ENCODE measurements at regions of chr14 and their contacts with region 1.

Region 1: GRCh38 chr14:22852940-22853767 is 16.8 kb downstream of the MMP14 start:
- DNase-seq: peak; percentile 90
- H3K4me3 Mint-ChIP-seq: peak overlapping the region; percentile 68
- H3K27ac Mint-ChIP-seq: peak overlapping the region; percentile 44
- H3K4me1 Mint-ChIP-seq: peaks cover 46% of the 10 kb centered on the region
- H3K27me3 Mint-ChIP-seq: peaks cover 23% of the 10 kb centered on the region

Region 2: DNA sequence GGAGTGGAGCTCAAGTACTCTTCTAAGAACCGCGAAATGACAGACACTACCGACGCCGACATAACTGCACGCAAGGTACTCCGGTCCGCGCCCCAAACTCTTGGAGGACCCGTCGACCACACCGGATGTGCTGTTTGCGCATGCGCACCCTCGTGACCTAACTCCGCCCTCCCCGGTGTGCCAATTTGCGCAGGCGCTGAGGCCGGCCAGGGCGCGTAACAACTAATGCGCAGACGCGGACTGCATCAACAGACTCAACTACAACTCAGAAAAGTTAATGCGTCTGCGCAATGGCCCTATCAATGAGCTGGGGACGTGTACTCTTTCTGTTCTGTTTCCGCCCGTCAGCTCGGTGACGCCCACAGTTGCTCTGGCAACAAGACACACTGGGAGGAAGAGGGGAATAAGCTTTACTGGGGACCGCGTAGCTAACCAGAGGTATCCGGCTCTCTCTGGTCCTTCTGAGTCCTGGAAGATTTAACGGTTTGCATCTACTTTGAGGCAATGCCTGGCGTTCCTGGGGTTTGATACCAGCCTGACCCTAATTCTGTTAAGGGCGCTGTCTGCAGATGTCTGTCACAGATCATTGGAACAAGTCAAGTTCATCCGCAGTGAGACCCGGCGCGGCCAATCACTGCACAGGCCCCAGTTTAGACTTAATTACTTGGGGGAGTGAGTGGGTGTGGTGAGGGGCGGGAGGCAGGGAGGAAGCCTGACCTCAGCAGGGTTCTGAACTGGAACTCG is 263.9 kb before region 1 on chr14 and contains the start of gene DAD1:
- CTCF ChIA-PET with region 1: interaction called, 12 read pairs
- POLR2A ChIA-PET with region 1: no interaction called
- DNase-seq: peak; percentile 100
- H3K4me3 Mint-ChIP-seq: peak within 1 kb of the TSS; percentile 93
- H3K27ac Mint-ChIP-seq: peak within 1 kb of the TSS; percentile 98
- H3K4me1 Mint-ChIP-seq: peaks cover 55% of the 10 kb centered on the region
- H3K27me3 Mint-ChIP-seq: peaks cover 6% of the 10 kb centered on the region
- total RNA-seq, gene DAD1: 160 to 167 TPM

Region 3: DNA sequence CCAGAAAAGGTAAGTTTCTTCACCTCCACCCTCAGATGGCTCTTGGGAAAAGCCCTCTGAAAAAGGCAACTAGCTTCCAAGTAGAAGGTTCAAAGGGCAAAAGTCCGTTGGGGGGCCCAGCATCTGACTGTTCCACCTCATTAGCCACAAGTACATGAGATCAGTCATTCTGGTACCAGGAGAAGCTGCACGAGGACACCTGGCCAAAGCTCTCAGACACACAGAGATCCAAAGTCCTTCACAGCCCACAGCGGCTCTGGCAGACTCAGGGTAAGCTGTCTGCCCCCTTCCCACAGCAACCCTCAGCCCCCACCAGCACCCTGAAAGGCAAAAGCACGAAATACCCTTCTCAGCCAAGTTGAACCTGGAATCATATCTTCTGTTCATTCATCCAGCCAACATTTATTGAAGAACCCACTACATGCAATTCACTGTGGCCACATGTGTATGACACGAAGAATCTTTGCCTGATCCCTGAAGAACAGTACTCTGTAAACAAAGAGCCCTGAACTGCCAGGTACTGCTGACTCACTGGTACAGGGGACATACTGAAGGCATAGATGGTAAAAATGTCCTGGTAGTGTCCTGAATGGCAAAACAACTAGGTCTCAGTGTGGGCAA is 57.0 kb before region 1 on chr14:
- CTCF ChIA-PET with region 1: no interaction called
- POLR2A ChIA-PET with region 1: no interaction called
- DNase-seq: no peak
- H3K4me3 Mint-ChIP-seq: no peak overlapping the region
- H3K27ac Mint-ChIP-seq: no peak overlapping the region
- H3K4me1 Mint-ChIP-seq: no peaks in the 10 kb centered on the region
- H3K27me3 Mint-ChIP-seq: peaks cover 46% of the 10 kb centered on the region

Region 4: DNA sequence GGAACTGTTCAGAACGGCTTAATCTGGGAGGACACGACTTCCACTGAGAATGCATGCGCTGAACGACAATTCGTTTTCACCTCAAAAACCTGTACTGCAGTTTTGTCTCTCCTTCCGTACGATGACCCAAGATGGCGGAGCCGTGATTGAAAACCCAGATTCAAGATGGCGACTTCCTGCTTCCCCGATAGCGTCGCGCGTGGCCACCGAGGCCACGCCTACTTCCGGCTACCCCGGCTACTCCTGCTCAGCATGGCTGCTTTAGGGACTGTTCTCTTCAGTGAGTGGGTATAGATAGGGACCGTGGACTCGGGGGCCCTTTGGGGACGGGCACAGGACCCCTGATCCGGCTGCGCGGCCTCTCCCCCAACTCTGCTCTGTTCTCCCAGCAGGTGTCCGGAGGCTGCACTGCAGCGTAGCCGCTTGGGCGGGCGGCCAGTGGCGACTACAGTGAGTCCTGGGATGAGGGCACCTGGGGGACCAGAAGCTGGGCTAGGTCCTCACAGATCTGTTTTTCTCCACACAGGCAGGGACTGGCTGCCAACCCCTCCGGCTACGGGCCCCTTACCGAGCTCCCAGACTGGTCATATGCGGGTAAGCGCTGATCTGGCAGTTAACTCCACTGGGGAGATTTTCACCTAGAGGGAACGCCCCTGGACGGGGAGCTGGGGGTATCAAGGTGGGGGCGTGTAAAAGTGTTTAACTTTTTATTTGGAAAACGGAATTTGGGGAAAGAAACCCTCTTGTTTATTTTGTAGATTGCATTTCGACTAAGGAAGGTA is 23.3 kb before region 1 on chr14 and contains the start of gene MRPL52:
- CTCF ChIA-PET with region 1: interaction called, 195 read pairs
- POLR2A ChIA-PET with region 1: interaction called, 17 read pairs
- DNase-seq: peak; percentile 93
- H3K4me3 Mint-ChIP-seq: peak within 1 kb of the TSS; percentile 87
- H3K27ac Mint-ChIP-seq: peak within 1 kb of the TSS; percentile 90
- H3K4me1 Mint-ChIP-seq: peaks cover 33% of the 10 kb centered on the region
- H3K27me3 Mint-ChIP-seq: no peaks in the 10 kb centered on the region
- total RNA-seq, gene MRPL52: 108 to 119 TPM

Region 5: GRCh38 chr14:22865424-22866405 is 12.6 kb after region 1 on chr14:
- CTCF ChIA-PET with region 1: interaction called, 71 read pairs
- POLR2A ChIA-PET with region 1: interaction called, 21 read pairs
- DNase-seq: no peak
- H3K4me3 Mint-ChIP-seq: no peak overlapping the region
- H3K27ac Mint-ChIP-seq: no peak overlapping the region
- H3K4me1 Mint-ChIP-seq: peaks cover 13% of the 10 kb centered on the region
- H3K27me3 Mint-ChIP-seq: peaks cover 17% of the 10 kb centered on the region

Region 6: GRCh38 chr14:22900081-22900799 is 47.1 kb after region 1 on chr14:
- CTCF ChIA-PET with region 1: interaction called, 35 read pairs
- POLR2A ChIA-PET with region 1: interaction called, 6 read pairs
- DNase-seq: peak; percentile 48
- H3K4me3 Mint-ChIP-seq: no peak overlapping the region
- H3K27ac Mint-ChIP-seq: peak overlapping the region; percentile 44
- H3K4me1 Mint-ChIP-seq: peaks cover 19% of the 10 kb centered on the region
- H3K27me3 Mint-ChIP-seq: no peaks in the 10 kb centered on the region